Endothelial cell of umbilical vein (primary cell): ENCODE measurements at regions of chr16 and their contacts with region 1.

Region 1: DNA sequence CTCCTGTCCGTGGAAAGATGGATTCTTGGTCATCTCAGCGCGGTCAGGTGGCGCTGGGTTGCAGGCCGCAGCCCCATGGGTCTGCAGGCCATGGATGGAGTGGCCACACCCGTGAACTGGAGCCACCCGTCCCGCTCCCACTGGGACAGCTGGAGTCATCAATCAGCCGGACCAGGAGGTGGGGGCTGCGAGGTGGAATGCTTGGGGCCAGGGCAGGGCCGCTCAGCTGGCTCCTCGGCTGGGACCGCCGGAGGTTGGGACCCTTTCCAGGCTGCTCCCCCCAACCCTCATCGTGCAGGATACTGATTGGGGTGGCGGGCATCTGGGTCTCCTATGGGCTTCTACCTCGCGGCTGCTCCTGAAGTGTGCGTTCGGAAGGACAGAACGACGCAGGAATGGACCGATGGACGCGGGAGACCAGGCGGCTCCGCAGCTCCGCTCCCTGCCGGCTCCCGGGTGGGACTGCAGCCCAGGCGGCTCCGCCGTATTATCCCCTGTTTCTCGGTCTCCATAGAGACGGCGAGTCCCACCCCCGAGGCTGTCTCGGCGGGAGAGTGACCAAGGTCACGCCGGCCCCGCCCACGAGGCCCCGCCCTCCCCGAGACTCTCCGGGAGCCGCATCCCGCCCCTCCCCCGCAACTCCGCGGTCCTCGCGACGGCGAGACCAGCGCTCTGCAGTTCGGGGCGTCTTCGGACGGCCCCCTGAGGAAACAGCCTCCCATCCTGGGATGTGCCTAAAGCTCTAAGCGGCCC is at the start of gene TPPP3:
- DNase-seq: peak; percentile 81
- H3K4me3 ChIP-seq: peak within 1 kb of the TSS in 2 of 3 experiments; percentile 9 to 26
- H3K27ac ChIP-seq: no peak within 1 kb of the TSS
- H3K4me1 ChIP-seq: peaks cover 13% of the 10 kb centered on the region
- H3K27me3 ChIP-seq: peaks cover 9 to 11% of the 10 kb centered on the region in 2 experiments
- CTCF ChIP-seq: peak; percentile 63 to 85
- POLR2A ChIP-seq: no peak
- total RNA-seq, gene TPPP3: 1.3 and 2.0 TPM in 2 replicates

Region 2: GRCh38 chr16:66954097-66954659 is 439.0 kb before region 1 on chr16:
- CTCF ChIA-PET with region 1: no interaction called
- POLR2A ChIA-PET with region 1: no interaction called
- dilution Hi-C with region 1: no loop called
- intact Hi-C with region 1: loop called (anchors 10 kb)
- DNase-seq: peak; percentile 78
- H3K4me3 ChIP-seq: no peak overlapping the region
- H3K27ac ChIP-seq: no peak overlapping the region
- H3K4me1 ChIP-seq: no peaks in the 10 kb centered on the region
- H3K27me3 ChIP-seq: peaks cover 3 to 5% of the 10 kb centered on the region in 2 experiments
- CTCF ChIP-seq: peak; percentile 78 to 85
- POLR2A ChIP-seq: no peak

Region 3: GRCh38 chr16:67260426-67261075 is 132.7 kb before region 1 on chr16:
- CTCF ChIA-PET with region 1: interaction called, 34 read pairs
- POLR2A ChIA-PET with region 1: no interaction called
- dilution Hi-C with region 1: no loop called
- intact Hi-C with region 1: loop called (anchors 1 kb)
- DNase-seq: peak; percentile 24
- H3K4me3 ChIP-seq: no peak overlapping the region
- H3K27ac ChIP-seq: no peak overlapping the region
- H3K4me1 ChIP-seq: peaks cover 4% of the 10 kb centered on the region
- H3K27me3 ChIP-seq: no peaks in the 10 kb centered on the region
- CTCF ChIP-seq: peak; percentile 44 to 51
- POLR2A ChIP-seq: no peak

Region 4: DNA sequence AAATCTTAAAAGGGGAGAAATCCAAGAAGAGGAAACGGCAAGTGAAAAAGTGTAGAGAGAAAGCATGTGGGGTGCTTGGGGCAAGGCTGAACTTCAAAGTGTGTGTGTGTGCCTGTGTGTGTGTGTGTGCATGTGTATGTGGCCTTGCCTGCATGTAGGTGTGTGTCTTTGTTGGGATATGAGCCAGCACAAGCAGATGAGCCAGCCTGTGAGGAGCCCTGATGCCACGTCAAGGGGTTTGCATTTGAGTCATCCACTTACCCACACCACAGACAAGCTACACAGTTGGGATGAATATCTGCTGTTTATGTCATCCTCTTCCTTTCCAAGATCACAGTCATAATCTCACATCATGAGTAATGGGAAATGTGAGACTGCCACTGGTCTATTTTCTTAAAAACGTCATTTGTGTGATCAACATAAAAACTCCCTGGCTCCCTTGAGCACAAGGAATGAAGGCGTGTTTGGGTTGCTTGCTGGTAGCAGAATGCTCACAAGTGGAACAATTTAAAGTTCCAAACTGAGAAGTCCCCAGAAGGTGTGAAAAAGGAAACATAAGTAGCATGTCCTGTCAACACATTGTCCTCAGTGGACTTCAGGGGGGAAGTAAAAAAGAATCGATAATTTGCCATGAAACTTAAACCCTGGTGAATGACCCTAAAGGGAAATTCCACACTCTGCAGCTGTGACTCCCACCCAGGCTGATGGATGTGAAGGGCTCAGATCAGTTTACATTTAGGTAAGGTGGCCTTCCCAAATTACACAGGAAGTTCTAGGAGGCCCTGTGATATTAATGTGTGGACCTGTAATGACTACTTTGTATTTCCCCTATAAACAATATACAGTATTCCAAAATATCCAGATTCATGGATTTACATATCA is 81.4 kb before region 1 on chr16:
- CTCF ChIA-PET with region 1: no interaction called
- POLR2A ChIA-PET with region 1: no interaction called
- dilution Hi-C with region 1: no loop called
- intact Hi-C with region 1: no loop called
- DNase-seq: peak; percentile 92
- H3K4me3 ChIP-seq: no peak overlapping the region
- H3K27ac ChIP-seq: peak overlapping the region; percentile 72
- H3K4me1 ChIP-seq: peaks cover 12% of the 10 kb centered on the region
- H3K27me3 ChIP-seq: no peaks in the 10 kb centered on the region
- CTCF ChIP-seq: no peak
- POLR2A ChIP-seq: peak; percentile 36

Region 5: DNA sequence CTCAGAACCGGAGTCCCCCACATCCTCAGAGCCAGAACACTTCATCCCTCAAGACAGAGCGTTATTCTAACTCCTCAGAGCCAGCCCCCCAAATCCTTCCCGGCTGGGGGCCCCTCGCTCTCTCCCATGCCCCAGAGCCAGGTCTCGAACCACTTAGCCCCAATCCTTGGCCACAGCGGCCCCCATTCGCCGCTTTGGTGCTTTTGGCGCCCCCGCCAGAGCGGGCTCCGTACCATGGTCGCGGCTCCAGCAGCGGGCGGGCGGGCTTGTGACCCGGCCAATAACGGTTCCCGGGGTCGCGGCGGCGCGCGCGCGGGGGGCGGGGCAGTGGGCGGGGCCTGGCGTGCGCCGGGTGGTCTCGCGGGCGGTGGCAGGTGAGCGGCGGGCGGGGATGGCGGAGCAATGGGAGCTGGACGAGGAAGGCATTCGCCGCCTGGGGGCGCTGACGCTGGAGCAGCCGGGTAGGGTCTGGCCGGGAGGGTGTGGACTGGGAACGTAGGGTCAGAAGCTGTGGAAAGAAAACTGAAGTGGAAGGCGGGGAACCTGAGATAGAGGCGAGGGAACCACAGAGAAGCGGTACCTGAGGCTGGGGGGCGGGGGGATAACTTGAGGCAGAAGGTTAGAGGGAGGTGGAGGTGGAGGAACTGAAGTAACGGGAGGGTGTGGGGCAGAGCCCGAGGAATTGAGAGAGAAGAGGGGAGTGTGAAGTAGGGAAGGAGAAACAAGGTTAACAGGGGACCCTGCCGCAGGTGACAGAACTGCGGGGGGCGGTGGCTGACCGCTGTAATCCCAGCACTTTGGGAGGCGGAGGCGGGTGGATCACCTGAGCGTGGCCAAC is 66.5 kb before region 1 on chr16 and contains the starts of genes KCTD19 and LRRC36:
- CTCF ChIA-PET with region 1: interaction called, 21 read pairs
- POLR2A ChIA-PET with region 1: no interaction called
- dilution Hi-C with region 1: no loop called
- intact Hi-C with region 1: loop called (anchors 1 kb)
- DNase-seq: peak; percentile 71
- H3K4me3 ChIP-seq: peak within 1 kb of the TSS; percentile 54 to 87 (median 83)
- H3K27ac ChIP-seq: peak within 1 kb of the TSS; percentile 61
- H3K4me1 ChIP-seq: peaks cover 17% of the 10 kb centered on the region
- H3K27me3 ChIP-seq: peaks cover 10 to 15% of the 10 kb centered on the region in 2 experiments
- CTCF ChIP-seq: peak; percentile 68 to 76
- POLR2A ChIP-seq: no peak
- total RNA-seq, gene KCTD19: 0.16 and 0.44 TPM in 2 replicates
- total RNA-seq, gene LRRC36: 2.0 and 2.4 TPM in 2 replicates

Region 6: DNA sequence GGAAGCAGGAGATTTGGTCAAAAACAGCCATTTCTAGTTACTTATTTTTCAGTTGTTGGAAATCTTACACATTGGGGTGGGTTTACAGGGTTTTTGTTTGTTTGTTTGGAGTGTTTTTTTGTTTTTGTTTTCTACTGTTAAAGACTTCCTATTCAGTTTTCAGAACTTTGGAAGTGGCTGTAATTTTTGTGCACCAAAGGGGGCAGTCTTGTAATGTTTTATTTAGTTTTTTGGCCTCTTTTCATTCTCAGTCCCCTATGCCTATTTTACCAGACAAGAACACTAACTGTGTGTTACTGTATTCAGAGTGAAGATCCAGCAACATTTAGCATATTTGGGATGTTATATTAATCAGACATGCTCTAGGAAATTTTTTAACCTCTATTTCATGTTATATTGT is 20.5 kb before region 1 on chr16:
- CTCF ChIA-PET with region 1: interaction called, 21 read pairs
- POLR2A ChIA-PET with region 1: no interaction called
- dilution Hi-C with region 1: no loop called
- intact Hi-C with region 1: loop called (anchors 1 kb)
- DNase-seq: peak; percentile 40
- H3K4me3 ChIP-seq: no peak overlapping the region
- H3K27ac ChIP-seq: no peak overlapping the region
- H3K4me1 ChIP-seq: no peaks in the 10 kb centered on the region
- H3K27me3 ChIP-seq: peaks cover 3 to 17% of the 10 kb centered on the region in 2 experiments
- CTCF ChIP-seq: peak in 1 of 2 donors; percentile 39
- POLR2A ChIP-seq: no peak

Region 7: DNA sequence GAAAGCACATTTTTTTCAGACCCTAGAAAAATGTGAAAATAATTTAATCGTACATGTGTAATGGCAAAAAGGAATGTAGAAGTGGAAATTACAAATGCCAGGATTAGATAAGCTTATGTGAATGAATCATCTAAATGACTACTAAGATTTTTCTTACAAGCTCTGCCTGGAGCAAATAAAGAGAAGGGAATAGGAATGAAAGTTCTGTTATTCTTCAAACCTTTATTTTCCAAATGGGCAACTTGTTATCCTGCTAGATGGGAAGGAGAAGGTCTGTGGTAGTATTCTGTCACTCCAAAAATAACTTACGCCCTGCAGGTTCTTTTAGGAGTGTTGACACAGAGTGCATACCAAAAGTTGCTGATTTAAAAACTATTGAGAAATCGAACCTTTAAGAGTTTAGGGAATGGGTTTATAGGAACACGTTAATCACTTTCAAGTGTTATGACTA is 178.8 kb after region 1 on chr16:
- CTCF ChIA-PET with region 1: no interaction called
- POLR2A ChIA-PET with region 1: no interaction called
- dilution Hi-C with region 1: no loop called
- intact Hi-C with region 1: no loop called
- DNase-seq: peak; percentile 68
- H3K4me3 ChIP-seq: no peak overlapping the region
- H3K27ac ChIP-seq: peak overlapping the region; percentile 84
- H3K4me1 ChIP-seq: peaks cover 20% of the 10 kb centered on the region
- H3K27me3 ChIP-seq: no peaks in the 10 kb centered on the region
- CTCF ChIP-seq: no peak
- POLR2A ChIP-seq: no peak